CD14-positive monocyte (primary cell): ENCODE measurements at regions of chr3 and their contacts with region 1.

Region 1: DNA sequence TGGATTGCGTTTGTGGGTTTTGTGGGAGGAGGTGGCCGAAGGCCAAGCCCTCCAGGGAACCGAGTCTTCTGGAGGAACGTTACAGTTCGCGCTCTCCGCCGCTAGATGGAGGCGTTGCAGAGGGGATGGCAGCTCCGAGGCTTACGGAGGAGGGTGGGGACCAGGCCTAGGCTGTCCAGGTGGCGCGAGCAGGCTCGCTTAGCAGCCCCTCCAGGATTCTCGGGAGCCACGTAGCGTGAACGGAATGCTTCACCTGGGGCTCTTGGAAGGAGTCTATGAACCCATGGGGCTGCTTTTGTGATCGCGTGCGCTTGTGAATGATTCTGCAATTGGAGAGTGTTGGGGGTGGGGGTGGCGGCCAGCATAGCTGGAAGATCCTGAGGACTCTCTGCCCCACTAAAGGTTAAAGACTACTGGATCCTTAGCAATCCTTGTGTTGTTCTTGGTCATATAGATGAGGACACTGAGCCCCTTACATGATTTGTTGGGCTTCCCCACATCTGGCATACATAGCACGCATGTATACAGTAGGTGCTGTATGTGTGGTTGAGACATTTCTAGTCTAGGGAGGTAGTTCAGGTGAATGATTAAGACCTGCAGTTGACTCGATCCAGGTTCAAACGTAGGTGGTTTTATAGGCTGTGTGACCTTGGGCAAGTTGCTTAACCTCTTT is 25.7 kb downstream of the FAM3D start:
- DNase-seq: peak; percentile 36 to 57 (median 54)
- H3K4me3 ChIP-seq: no peak overlapping the region
- H3K4me3 Mint-ChIP-seq: no peak overlapping the region
- H3K27ac ChIP-seq: no peak overlapping the region
- H3K27ac Mint-ChIP-seq: no peak overlapping the region
- H3K4me1 ChIP-seq: peaks cover 2 to 4% of the 10 kb centered on the region in 2 donors
- H3K4me1 Mint-ChIP-seq: peaks cover 4% of the 10 kb centered on the region
- H3K27me3 ChIP-seq: no peaks in the 10 kb centered on the region
- H3K27me3 Mint-ChIP-seq: peaks cover 0 to 11% (median 0%) of the 10 kb centered on the region in 3 donors
- CTCF ChIP-seq: peak; percentile 93

Region 2: GRCh38 chr3:58177747-58178527 is 462.9 kb before region 1 on chr3:
- intact Hi-C with region 1: no loop called
- DNase-seq: peak; percentile 78 to 82 (median 81)
- H3K4me3 ChIP-seq: peak overlapping the region; percentile 5 to 73 (median 37)
- H3K4me3 Mint-ChIP-seq: peak overlapping the region; percentile 67 to 90
- H3K27ac ChIP-seq: no peak overlapping the region
- H3K27ac Mint-ChIP-seq: peak overlapping the region in 1 of 7 donors; percentile 18
- H3K4me1 ChIP-seq: peaks cover 36 to 45% of the 10 kb centered on the region in 2 donors
- H3K4me1 Mint-ChIP-seq: peaks cover 42% of the 10 kb centered on the region
- H3K27me3 ChIP-seq: peaks cover 0 to 8% of the 10 kb centered on the region in 2 donors
- H3K27me3 Mint-ChIP-seq: peaks cover 10 to 19% (median 12%) of the 10 kb centered on the region in 3 donors
- CTCF ChIP-seq: peak; percentile 96

Region 3: DNA sequence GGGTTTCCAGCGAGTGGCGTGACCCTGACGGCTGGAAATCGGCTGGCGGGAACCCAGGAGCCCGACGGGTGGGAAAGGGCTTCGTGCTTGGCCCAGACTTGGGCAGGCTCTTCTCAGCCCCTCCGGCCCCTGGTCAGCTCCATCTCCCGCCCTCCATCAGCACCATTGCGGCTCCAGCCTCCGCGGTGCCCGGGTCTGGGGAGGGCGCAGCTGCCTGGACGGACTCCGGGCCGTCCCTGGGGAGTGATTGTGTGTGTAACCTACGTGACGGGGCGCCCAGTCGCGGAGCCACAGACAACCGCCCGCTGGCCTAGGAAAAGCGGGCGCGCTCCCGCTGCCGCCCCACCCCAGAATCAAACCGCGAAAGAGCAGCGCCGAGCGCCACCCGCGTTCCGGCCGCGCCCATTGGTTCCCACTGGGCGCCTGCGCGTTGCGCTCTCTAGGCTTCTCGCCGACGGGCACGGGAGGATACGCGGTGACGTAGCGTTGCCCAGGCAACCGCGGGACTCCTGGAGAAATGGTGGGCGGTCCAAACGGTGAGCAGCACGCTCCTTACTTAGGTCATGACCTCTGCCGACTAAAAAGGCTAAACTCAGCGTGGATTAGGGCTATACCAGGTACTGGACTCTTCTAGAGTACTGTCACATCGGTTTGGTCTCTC is 409.0 kb after region 1 on chr3 and contains the start of gene CFAP20DC:
- intact Hi-C with region 1: loop called in 1 of 2 experiments (anchors 5 kb)
- DNase-seq: peak; percentile 88 to 93 (median 89)
- H3K4me3 ChIP-seq: peak within 1 kb of the TSS; percentile 47 to 75 (median 71)
- H3K4me3 Mint-ChIP-seq: peak within 1 kb of the TSS; percentile 78 to 87
- H3K27ac ChIP-seq: no peak within 1 kb of the TSS
- H3K27ac Mint-ChIP-seq: peak within 1 kb of the TSS in 5 of 7 donors; percentile 38 to 84 (median 66)
- H3K4me1 ChIP-seq: peaks cover 10 to 12% of the 10 kb centered on the region in 2 donors
- H3K4me1 Mint-ChIP-seq: peaks cover 12% of the 10 kb centered on the region
- H3K27me3 ChIP-seq: no peaks in the 10 kb centered on the region
- H3K27me3 Mint-ChIP-seq: peaks cover 0 to 2% (median 0%) of the 10 kb centered on the region in 3 donors
- CTCF ChIP-seq: no peak
- polyA plus RNA-seq, gene CFAP20DC: not detected